Caco-2 (cell line): ENCODE measurements at regions of chr9 and their contacts with region 1.

Region 1: DNA sequence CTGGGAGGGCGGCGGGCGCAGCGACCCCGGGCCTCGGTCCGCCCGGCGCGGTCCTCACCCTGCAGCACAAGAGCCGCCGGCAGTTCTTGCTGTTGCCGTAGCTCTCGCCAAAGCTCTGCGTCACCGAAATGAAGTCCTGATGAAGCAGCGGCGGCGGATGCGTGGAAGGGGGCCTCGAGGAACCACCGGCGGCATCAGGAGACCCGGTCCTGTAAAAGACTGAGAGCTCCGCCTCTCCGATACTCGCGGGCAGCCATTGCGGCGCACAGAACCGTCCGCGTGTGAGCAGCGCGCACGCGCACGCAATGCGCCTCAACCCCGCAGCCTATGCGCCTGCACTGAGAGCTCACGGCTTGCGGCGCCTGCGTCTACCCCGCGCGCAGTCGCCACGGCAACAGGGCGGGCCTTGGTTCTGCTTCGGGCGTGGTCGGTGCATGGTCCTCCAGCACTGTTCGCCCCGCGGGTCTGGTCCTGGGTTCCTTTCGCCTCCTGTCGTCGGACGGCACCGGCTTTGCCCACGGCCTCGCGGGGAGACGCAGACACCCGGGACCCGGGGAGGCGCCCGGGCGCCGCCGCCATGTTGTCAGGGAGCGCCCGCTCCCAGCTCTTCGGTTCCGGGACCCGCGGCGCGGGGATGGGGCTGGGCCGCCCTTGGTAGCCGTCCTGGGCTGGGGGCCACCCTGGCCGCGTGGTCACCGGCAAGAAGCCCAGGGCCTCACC is 9.3 kb upstream of the GRIN1 start:
- DNase-seq: peak; percentile 88 to 90
- H3K4me3 ChIP-seq: peak overlapping the region; percentile 87
- H3K4me3 Mint-ChIP-seq: peak overlapping the region; percentile 82
- H3K27ac Mint-ChIP-seq: peak overlapping the region; percentile 89
- H3K4me1 ChIP-seq: 0 out of 2 replicates have a peak, but pooled peaks cover 9% of the 10 kb centered on the region
- H3K4me1 Mint-ChIP-seq: peaks cover 21% of the 10 kb centered on the region
- H3K27me3 ChIP-seq: no peaks in the 10 kb centered on the region
- H3K27me3 Mint-ChIP-seq: no peaks in the 10 kb centered on the region
- CTCF ChIP-seq: no peak

Region 2: GRCh38 chr9:136928591-136928990 is 201.0 kb before region 1 on chr9:
- CTCF ChIA-PET with region 1: no interaction called
- POLR2A ChIA-PET with region 1: no interaction called
- intact Hi-C with region 1: no loop called
- DNase-seq: no peak
- H3K4me3 ChIP-seq: no peak overlapping the region
- H3K4me3 Mint-ChIP-seq: no peak overlapping the region
- H3K27ac Mint-ChIP-seq: no peak overlapping the region
- H3K4me1 ChIP-seq: no peaks in the 10 kb centered on the region
- H3K4me1 Mint-ChIP-seq: peaks cover 5% of the 10 kb centered on the region
- H3K27me3 ChIP-seq: no peaks in the 10 kb centered on the region
- H3K27me3 Mint-ChIP-seq: no peaks in the 10 kb centered on the region
- CTCF ChIP-seq: no peak

Region 3: GRCh38 chr9:137077010-137077747 is 52.4 kb before region 1 on chr9 and contains the start of gene UAP1L1:
- CTCF ChIA-PET with region 1: no interaction called
- POLR2A ChIA-PET with region 1: no interaction called
- intact Hi-C with region 1: no loop called
- DNase-seq: peak; percentile 64 to 69
- H3K4me3 ChIP-seq: peak within 1 kb of the TSS; percentile 75
- H3K4me3 Mint-ChIP-seq: peak within 1 kb of the TSS; percentile 60
- H3K27ac Mint-ChIP-seq: no peak within 1 kb of the TSS
- H3K4me1 ChIP-seq: peaks cover 17% of the 10 kb centered on the region
- H3K4me1 Mint-ChIP-seq: no peaks in the 10 kb centered on the region
- H3K27me3 ChIP-seq: no peaks in the 10 kb centered on the region
- H3K27me3 Mint-ChIP-seq: no peaks in the 10 kb centered on the region
- CTCF ChIP-seq: no peak
- total RNA-seq, gene UAP1L1: 22.7 and 24.6 TPM in 2 replicates

Region 4: GRCh38 chr9:137168905-137169856 is 39.6 kb after region 1 on chr9:
- CTCF ChIA-PET with region 1: no interaction called
- POLR2A ChIA-PET with region 1: interaction called, 10 read pairs
- intact Hi-C with region 1: loop called (anchors 5 kb)
- DNase-seq: peak; percentile 75 to 76
- H3K4me3 ChIP-seq: peak overlapping the region; percentile 74
- H3K4me3 Mint-ChIP-seq: peak overlapping the region; percentile 79
- H3K27ac Mint-ChIP-seq: no peak overlapping the region
- H3K4me1 ChIP-seq: peaks cover 13% of the 10 kb centered on the region
- H3K4me1 Mint-ChIP-seq: peaks cover 6% of the 10 kb centered on the region
- H3K27me3 ChIP-seq: peaks cover 2% of the 10 kb centered on the region; the same call in 1 of the 2 replicates
- H3K27me3 Mint-ChIP-seq: peaks cover 4% of the 10 kb centered on the region
- CTCF ChIP-seq: no peak